Activated B cell treated with CpG ODN at 0.5 μM for 24 hours (primary cell): ENCODE measurements at regions of chr7 and their contacts with region 1.

Region 1: GRCh38 chr7:3897438-3898385 is 596.7 kb downstream of the SDK1 start:
- DNase-seq: no peak
- ATAC-seq: peak; percentile 56
- H3K4me3 Mint-ChIP-seq: no peak overlapping the region
- H3K27ac Mint-ChIP-seq: no peak overlapping the region
- H3K4me1 Mint-ChIP-seq: no peaks in the 10 kb centered on the region
- H3K27me3 Mint-ChIP-seq: peaks cover 9% of the 10 kb centered on the region
- CTCF ChIP-seq: peak; percentile 97

Region 2: DNA sequence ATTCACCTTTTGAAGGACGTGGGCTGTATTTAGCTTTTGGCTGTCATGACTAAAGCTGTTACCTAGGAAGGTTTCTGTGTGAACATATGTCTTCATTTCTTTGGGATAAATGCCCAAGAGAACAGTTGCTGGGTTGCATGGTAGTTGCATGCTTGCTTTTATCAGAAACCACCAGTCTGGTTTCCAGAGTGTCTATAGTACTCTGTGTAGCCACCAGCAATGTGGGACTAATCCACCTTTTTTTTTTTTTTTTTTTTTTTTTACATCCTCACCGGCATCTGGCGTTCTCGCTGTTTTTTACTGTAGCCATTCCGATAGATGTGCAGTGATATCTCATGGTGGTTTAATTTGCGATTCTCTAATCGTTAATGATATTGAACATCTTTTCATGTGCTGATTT is 298.9 kb before region 1 on chr7:
- CTCF ChIA-PET with region 1: no interaction called
- POLR2A ChIA-PET with region 1: no interaction called
- intact Hi-C with region 1: loop called (anchors 5 kb)
- DNase-seq: no peak
- ATAC-seq: no peak
- H3K4me3 Mint-ChIP-seq: no peak overlapping the region
- H3K27ac Mint-ChIP-seq: no peak overlapping the region
- H3K4me1 Mint-ChIP-seq: peaks cover 39% of the 10 kb centered on the region
- H3K27me3 Mint-ChIP-seq: no peaks in the 10 kb centered on the region
- CTCF ChIP-seq: no peak